GM10248 (cell line): ENCODE measurements at regions of chr4 and their contacts with region 1.

Region 1: DNA sequence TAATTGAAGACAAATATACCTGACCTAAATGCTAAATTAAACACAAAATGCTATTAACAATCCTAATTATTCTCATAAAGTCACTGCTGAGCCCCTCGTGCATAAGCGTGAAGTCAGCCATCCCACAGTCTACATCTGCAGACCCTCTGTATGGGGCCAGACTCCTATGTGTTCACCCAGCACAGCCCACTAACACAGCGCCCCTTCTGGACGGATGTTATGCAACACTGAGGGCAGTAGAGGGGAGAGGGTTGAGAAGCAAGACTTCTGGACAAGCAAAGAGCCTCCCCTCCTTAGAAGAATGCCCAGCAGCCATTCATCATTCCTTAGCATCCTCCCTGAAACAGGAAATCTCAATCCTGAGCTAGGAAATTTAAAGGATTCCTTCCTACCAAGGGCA is 7.9 kb downstream of the TRPC3 start:
- DNase-seq: peak; percentile 24
- CTCF ChIP-seq: peak; percentile 38

Region 2: GRCh38 chr4:121316091-121316490 is 627.9 kb before region 1 on chr4:
- CTCF ChIA-PET with region 1: no interaction called
- POLR2A ChIA-PET with region 1: no interaction called
- DNase-seq: no peak
- CTCF ChIP-seq: no peak

Region 3: GRCh38 chr4:121957266-121957665 is 13.3 kb after region 1 on chr4:
- CTCF ChIA-PET with region 1: interaction called, 14 read pairs
- POLR2A ChIA-PET with region 1: no interaction called
- DNase-seq: no peak
- CTCF ChIP-seq: no peak

Region 4: GRCh38 chr4:122045533-122045932 is 101.6 kb after region 1 on chr4:
- CTCF ChIA-PET with region 1: no interaction called
- POLR2A ChIA-PET with region 1: no interaction called
- DNase-seq: no peak
- CTCF ChIP-seq: no peak